ENCODE measurements at regions of chrX and their contacts with region 1.

Region 1: GRCh38 chrX:80929251-80929650 is 119.6 kb upstream of the BRWD3 start:
- DNase-seq: no peak
- ATAC-seq: no peak
- H3K4me3 ChIP-seq: no peak overlapping the region
- H3K27ac ChIP-seq: no peak overlapping the region
- H3K4me1 ChIP-seq: no peaks in the 10 kb centered on the region
- H3K27me3 ChIP-seq: no peaks in the 10 kb centered on the region
- CTCF ChIP-seq: no peak
- POLR2A ChIP-seq: no peak
- RAD21 ChIP-seq: no peak

Region 2: DNA sequence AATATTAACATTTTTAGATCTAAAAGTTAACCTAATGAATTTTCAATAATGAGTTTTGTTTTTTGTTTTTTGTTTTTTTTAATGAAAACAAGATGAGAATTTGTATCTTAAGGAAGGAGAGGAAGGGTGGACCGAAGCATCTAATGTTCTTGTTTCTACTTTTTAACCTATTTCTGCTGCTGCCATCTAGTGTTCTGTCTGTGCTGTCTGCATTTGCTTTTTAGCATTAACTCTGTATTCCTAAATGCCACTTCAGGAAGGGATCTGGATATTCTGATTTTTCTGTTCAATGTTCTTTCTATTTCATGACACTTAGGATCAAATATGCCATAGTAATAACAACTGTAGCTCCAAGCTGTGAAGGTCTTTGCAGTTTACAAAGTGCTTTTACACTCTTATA is 281.2 kb before region 1 on chrX:
- CTCF ChIA-PET with region 1: no interaction called
- POLR2A ChIA-PET with region 1: no interaction called
- dilution Hi-C with region 1: no loop called
- in situ Hi-C with region 1: no loop called
- intact Hi-C with region 1: no loop called
- DNase-seq: no peak
- ATAC-seq: no peak
- H3K4me3 ChIP-seq: no peak overlapping the region
- H3K27ac ChIP-seq: no peak overlapping the region
- H3K4me1 ChIP-seq: no peaks in the 10 kb centered on the region
- H3K27me3 ChIP-seq: no peaks in the 10 kb centered on the region
- CTCF ChIP-seq: peak; percentile 38
- POLR2A ChIP-seq: no peak
- RAD21 ChIP-seq: no peak

Region 3: DNA sequence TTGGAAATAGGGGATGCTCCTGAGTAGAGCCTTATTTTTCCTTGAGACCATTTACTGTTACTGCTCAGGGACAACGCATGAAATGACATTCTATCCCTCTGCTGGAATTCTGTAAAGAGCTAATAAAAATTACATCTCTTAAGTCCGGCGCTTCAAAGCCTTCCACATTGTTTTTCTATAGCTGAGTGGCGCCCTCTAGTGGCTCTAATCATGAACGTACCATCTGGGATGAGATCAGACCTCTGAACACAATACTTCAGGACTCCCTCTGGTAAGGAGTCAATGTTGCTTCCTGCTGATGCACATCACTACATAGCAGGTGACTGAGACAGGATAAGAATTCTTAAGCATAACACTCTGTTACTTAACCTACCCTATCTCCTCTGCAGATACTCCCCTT is 266.5 kb after region 1 on chrX:
- CTCF ChIA-PET with region 1: no interaction called
- POLR2A ChIA-PET with region 1: no interaction called
- dilution Hi-C with region 1: no loop called
- in situ Hi-C with region 1: no loop called
- intact Hi-C with region 1: no loop called
- DNase-seq: peak; percentile 52
- ATAC-seq: peak; percentile 54; the same call in 1 of the 2 replicates
- H3K4me3 ChIP-seq: no peak overlapping the region
- H3K27ac ChIP-seq: no peak overlapping the region
- H3K4me1 ChIP-seq: no peaks in the 10 kb centered on the region
- H3K27me3 ChIP-seq: no peaks in the 10 kb centered on the region
- CTCF ChIP-seq: peak; percentile 53
- POLR2A ChIP-seq: no peak
- RAD21 ChIP-seq: peak; percentile 35

Region 4: DNA sequence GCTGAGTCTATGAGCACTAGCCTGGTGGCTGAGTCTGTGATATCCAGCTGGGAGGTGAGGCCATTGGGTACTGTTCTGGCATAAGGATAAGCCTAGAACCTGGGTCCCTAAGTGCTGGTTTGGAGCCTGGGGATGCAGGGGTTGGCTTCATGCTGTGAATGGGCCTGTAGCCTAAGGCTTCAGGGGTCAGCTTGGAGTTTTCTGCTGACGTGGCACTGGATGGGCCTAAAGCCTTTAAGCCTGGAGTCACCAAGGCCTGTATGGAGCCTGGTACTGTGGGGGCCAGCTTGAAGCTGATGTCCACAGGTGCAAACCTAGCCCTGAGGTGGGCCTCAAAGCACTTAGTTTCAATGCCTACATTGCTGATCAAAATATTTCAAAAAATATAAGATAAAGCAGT is 1599.3 kb after region 1 on chrX:
- CTCF ChIA-PET with region 1: no interaction called
- POLR2A ChIA-PET with region 1: no interaction called
- dilution Hi-C with region 1: no loop called
- in situ Hi-C with region 1: no loop called
- intact Hi-C with region 1: loop called (anchors 5 kb)
- DNase-seq: no peak
- ATAC-seq: no peak
- H3K4me3 ChIP-seq: no peak overlapping the region
- H3K27ac ChIP-seq: no peak overlapping the region
- H3K4me1 ChIP-seq: no peaks in the 10 kb centered on the region
- H3K27me3 ChIP-seq: no peaks in the 10 kb centered on the region
- CTCF ChIP-seq: no peak
- POLR2A ChIP-seq: no peak
- RAD21 ChIP-seq: no peak

Measured in IMR-90 (cell line).